Naive thymus-derived CD8-positive, alpha-beta T cell (primary cell): ENCODE measurements at regions of chr2 and their contacts with region 1.

Region 1: GRCh38 chr2:190534310-190535120 is at the start of gene NEMP2:
- DNase-seq: peak; percentile 68 to 93 (median 82)
- ATAC-seq: peak; percentile 77 to 80
- H3K4me3 Mint-ChIP-seq: peak within 1 kb of the TSS; percentile 92 to 99 (median 98)
- H3K27ac Mint-ChIP-seq: peak within 1 kb of the TSS; percentile 98 to 100 (median 100)
- H3K4me1 Mint-ChIP-seq: peaks cover 19 to 58% (median 53%) of the 10 kb centered on the region in 4 donors
- H3K27me3 Mint-ChIP-seq: no peaks in the 10 kb centered on the region
- polyA plus RNA-seq, gene NEMP2: 10.0 to 13.4 (median 12.1) TPM

Region 2: GRCh38 chr2:190408538-190409271 is 125.8 kb before region 1 on chr2:
- POLR2A ChIA-PET with region 1: interaction called, 99 read pairs
- DNase-seq: peak; percentile 70 to 92 (median 82)
- ATAC-seq: peak; percentile 39 to 53
- H3K4me3 Mint-ChIP-seq: peak overlapping the region; percentile 83 to 97 (median 92)
- H3K27ac Mint-ChIP-seq: peak overlapping the region; percentile 94 to 100 (median 99)
- H3K4me1 Mint-ChIP-seq: peaks cover 24 to 49% (median 45%) of the 10 kb centered on the region in 4 donors
- H3K27me3 Mint-ChIP-seq: no peaks in the 10 kb centered on the region

Region 3: GRCh38 chr2:190515687-190516086 is 18.8 kb before region 1 on chr2:
- POLR2A ChIA-PET with region 1: interaction called, 40 read pairs
- DNase-seq: peak in 3 of 10 donors; percentile 66 to 77 (median 74)
- ATAC-seq: peak; percentile 76 to 80
- H3K4me3 Mint-ChIP-seq: peak overlapping the region in 8 of 10 donors; percentile 30 to 76 (median 47)
- H3K27ac Mint-ChIP-seq: peak overlapping the region in 8 of 10 donors; percentile 7 to 89 (median 77)
- H3K4me1 Mint-ChIP-seq: peaks cover 17 to 50% (median 46%) of the 10 kb centered on the region in 4 donors
- H3K27me3 Mint-ChIP-seq: no peaks in the 10 kb centered on the region

Region 4: DNA sequence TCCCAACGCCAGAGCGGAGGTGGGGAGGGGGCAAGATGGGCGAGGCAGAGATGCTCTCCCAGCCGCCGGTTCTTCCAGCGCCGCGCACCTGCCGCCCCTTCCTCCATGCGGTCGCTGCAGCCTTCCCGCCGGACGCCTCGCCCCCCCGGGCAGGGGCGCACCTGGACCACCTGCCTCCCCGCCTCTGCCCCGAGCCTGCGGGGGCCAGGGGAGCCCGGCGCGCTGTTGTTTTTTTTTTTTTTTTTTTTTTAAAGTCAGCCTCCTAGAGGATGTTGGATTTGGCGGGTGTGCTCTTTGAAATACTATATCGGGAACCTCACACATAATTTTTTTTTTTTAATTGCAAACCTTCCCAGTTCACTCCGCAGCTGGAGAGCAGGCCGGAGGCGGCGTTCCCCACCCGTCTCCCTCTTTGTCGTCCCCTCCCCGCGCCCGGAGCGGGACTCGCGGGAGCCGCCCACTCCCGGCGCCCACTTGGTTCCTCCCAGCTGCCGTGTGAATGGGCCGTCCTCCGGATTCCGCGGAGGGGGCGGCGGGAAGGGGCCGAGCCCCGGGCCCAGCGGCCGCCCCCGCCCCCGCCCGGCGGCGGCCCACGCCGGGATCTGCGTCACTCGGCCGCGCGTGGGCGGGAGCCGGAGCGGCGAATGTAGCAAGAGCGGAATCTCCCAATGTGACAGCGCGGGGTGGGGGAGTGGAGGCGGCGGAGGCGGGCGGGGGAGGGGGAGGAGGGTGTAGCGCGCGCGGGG is 113.9 kb after region 1 on chr2:
- POLR2A ChIA-PET with region 1: interaction called, 10 read pairs
- DNase-seq: peak; percentile 86 to 96 (median 90)
- ATAC-seq: peak; percentile 73 to 79
- H3K4me3 Mint-ChIP-seq: peak overlapping the region; percentile 81 to 93 (median 86)
- H3K27ac Mint-ChIP-seq: peak overlapping the region; percentile 73 to 97 (median 90)
- H3K4me1 Mint-ChIP-seq: peaks cover 12 to 42% (median 30%) of the 10 kb centered on the region in 4 donors
- H3K27me3 Mint-ChIP-seq: no peaks in the 10 kb centered on the region